Heart left ventricle (tissue), 16 donors: ENCODE measurements at regions of chr18 and their contacts with region 1.

Region 1: GRCh38 chr18:9951022-9951859 is 37.4 kb downstream of the VAPA start:
- DNase-seq: no peak
- ATAC-seq: peak; percentile 66 to 77 (median 74)
- H3K4me3 ChIP-seq: no peak overlapping the region
- H3K27ac ChIP-seq: no peak overlapping the region
- H3K4me1 ChIP-seq: peaks cover 0 to 24% (median 0%) of the 10 kb centered on the region in 12 donors
- H3K27me3 ChIP-seq: no peaks in the 10 kb centered on the region
- CTCF ChIP-seq: peak; percentile 36 to 68 (median 58)
- POLR2A ChIP-seq: no peak

Region 2: DNA sequence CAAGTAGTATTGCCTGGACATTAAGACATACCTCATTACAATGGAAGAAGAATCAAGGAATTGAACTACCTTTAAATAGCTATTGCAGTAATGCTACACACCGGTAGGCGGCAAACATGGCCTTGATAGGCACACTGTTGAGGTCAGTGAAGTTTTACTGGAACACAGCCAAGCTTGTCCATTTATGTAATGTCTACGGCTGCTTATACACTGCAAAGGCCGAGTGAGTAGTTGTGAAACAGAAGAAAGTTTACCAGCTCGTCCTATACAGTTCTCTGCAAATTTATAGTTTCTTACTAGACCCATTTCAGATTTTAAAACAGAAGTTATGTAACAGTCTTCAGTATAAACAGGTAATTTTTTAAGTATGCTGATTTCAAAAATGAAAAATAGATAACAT is 375.7 kb before region 1 on chr18:
- intact Hi-C with region 1: loop called in 3 of 10 experiments (anchors 10 kb)
- DNase-seq: peak in 4 of 5 donors; percentile 80 to 88 (median 82)
- ATAC-seq: peak; percentile 96 to 99 (median 98)
- H3K4me3 ChIP-seq: peak overlapping the region in 1 of 12 donors; percentile 6
- H3K27ac ChIP-seq: peak overlapping the region in 7 of 12 donors; percentile 6 to 40 (median 23)
- H3K4me1 ChIP-seq: peaks cover 0 to 9% (median 4%) of the 10 kb centered on the region in 12 donors
- H3K27me3 ChIP-seq: no peaks in the 10 kb centered on the region
- CTCF ChIP-seq: peak; percentile 73 to 95 (median 86)
- POLR2A ChIP-seq: no peak

Region 3: GRCh38 chr18:9683407-9684396 is 267.5 kb before region 1 on chr18:
- intact Hi-C with region 1: loop called in 2 of 10 experiments (anchors 10 kb)
- DNase-seq: no peak
- ATAC-seq: peak; percentile 50 to 60 (median 54)
- H3K4me3 ChIP-seq: peak overlapping the region in 1 of 12 donors; percentile 13
- H3K27ac ChIP-seq: peak overlapping the region in 8 of 12 donors; percentile 52 to 79 (median 72)
- H3K4me1 ChIP-seq: peaks cover 0 to 26% (median 11%) of the 10 kb centered on the region in 12 donors
- H3K27me3 ChIP-seq: no peaks in the 10 kb centered on the region
- CTCF ChIP-seq: peak in 10 of 12 donors; percentile 12 to 59 (median 40)
- POLR2A ChIP-seq: no peak

Region 4: DNA sequence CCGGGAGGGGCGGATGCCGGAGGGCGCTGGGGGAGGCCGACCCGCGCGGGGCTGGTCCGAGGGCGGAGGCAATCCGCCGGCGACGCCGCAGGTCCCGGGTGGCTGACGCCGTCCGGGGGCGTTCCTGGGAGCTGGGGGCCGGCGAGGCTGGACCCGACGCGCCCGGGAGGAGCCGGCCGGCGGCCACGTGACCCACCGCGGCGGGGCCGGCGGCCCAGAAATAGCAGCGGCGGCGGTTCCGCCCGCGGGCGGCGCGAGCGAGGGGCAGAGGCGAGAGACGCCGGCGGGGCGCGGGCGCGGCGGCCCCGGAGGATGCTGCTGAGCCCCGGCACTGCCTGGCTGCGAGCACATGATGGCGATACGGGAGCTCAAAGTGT is 243.2 kb before region 1 on chr18 and contains the start of gene RAB31:
- intact Hi-C with region 1: loop called in 1 of 10 experiments (anchors 10 kb)
- DNase-seq: peak; percentile 86 to 90 (median 89)
- ATAC-seq: peak; percentile 66 to 96 (median 93)
- H3K4me3 ChIP-seq: peak within 1 kb of the TSS; percentile 60 to 98 (median 73)
- H3K27ac ChIP-seq: peak within 1 kb of the TSS; percentile 84 to 95 (median 88)
- H3K4me1 ChIP-seq: peaks cover 0 to 60% (median 10%) of the 10 kb centered on the region in 12 donors
- H3K27me3 ChIP-seq: no peaks in the 10 kb centered on the region
- CTCF ChIP-seq: peak in 3 of 12 donors; percentile 10 to 19 (median 12)
- POLR2A ChIP-seq: peak in 1 of 2 donors; percentile 68
- total RNA-seq, gene RAB31: 8.6 to 67.7 (median 15.4) TPM

Region 5: DNA sequence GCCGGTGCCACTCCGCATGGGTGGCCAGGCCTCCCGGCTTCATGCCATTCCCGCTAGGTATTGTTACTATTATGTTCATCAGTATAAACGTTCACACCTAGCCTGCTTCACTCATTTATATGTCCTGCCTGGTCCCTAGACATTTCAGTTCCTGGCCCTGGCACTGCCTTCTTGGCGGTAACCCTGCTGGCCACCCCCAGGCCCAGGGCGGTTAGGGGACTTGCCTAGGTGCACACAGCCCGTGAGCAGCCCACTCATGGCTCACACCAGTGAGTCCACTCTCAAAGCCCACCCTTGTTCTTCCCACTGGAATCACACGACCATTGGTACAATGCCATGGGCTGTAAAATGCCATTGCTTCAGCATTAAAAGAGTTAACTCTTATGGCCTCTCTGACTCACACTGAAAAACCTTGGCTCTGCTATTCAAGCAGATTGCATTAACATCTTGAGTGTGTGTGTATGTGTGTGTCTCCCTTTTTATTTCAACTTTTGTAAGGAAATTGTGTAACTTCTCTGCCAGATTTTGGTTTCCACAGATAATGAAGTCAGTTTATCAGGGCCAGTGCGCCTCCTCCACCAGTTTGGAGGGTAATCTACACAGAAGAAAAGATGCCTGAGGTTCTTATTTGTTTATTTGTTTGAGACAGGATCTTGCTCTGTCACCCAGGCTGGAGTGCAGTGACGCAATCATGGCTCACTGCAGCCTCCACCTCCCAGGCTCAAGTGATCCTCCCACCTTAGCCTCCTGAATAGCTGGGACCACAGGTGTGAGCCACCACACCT is 169.0 kb before region 1 on chr18:
- intact Hi-C with region 1: no loop called
- DNase-seq: no peak
- ATAC-seq: peak in 2 of 4 donors; percentile 59 to 79
- H3K4me3 ChIP-seq: no peak overlapping the region
- H3K27ac ChIP-seq: peak overlapping the region in 1 of 12 donors; percentile 71
- H3K4me1 ChIP-seq: peaks cover 0 to 30% (median 0%) of the 10 kb centered on the region in 12 donors
- H3K27me3 ChIP-seq: no peaks in the 10 kb centered on the region
- CTCF ChIP-seq: no peak
- POLR2A ChIP-seq: no peak

Region 6: GRCh38 chr18:9808295-9809241 is 142.7 kb before region 1 on chr18:
- intact Hi-C with region 1: loop called in 6 of 10 experiments (anchors 5 to 10 kb)
- DNase-seq: peak in 2 of 5 donors; percentile 50 to 56
- ATAC-seq: peak; percentile 58 to 74 (median 64)
- H3K4me3 ChIP-seq: peak overlapping the region in 2 of 12 donors; percentile 23 to 28
- H3K27ac ChIP-seq: peak overlapping the region; percentile 7 to 76 (median 62)
- H3K4me1 ChIP-seq: peaks cover 0 to 58% (median 33%) of the 10 kb centered on the region in 12 donors
- H3K27me3 ChIP-seq: no peaks in the 10 kb centered on the region
- CTCF ChIP-seq: no peak
- POLR2A ChIP-seq: no peak

Region 7: GRCh38 chr18:9814431-9814830 is 136.8 kb before region 1 on chr18:
- intact Hi-C with region 1: loop called in 5 of 10 experiments (anchors 5 to 10 kb)
- DNase-seq: no peak
- ATAC-seq: no peak
- H3K4me3 ChIP-seq: no peak overlapping the region
- H3K27ac ChIP-seq: peak overlapping the region in 3 of 12 donors; percentile 0 to 39 (median 39)
- H3K4me1 ChIP-seq: peaks cover 0 to 45% (median 17%) of the 10 kb centered on the region in 12 donors
- H3K27me3 ChIP-seq: no peaks in the 10 kb centered on the region
- CTCF ChIP-seq: no peak
- POLR2A ChIP-seq: no peak